Dendritic cell treated with granulocyte-macrophage colony-stimulating factor and Interleukin-4, amounts not matched to agents 40 ng/mL and 50 ng/mL, for 4 days (primary cell): ENCODE measurements at regions of chr7 and their contacts with region 1.

Region 1: DNA sequence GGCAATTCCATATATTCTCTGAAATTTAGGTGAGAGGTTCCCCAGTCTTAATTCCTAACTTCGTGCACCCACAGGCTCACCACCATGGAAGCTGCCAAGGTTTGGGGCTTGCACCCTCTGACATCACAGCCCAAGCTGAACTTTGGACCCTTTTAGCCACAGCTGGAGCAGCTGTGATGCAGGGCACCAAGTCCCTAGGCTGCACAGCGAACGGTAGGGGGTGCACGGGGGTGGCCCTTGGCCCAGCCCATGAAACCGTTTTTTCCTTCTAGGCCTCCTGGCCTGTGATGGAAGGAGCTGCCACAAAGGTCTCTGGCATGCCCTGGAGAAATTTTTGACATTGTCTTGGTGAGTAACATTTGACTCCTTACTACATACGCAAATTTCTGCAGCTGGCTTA is 251.9 kb upstream of the GRM3 start:
- H3K4me3 Mint-ChIP-seq: no peak overlapping the region
- H3K27ac Mint-ChIP-seq: no peak overlapping the region
- H3K4me1 Mint-ChIP-seq: no peaks in the 10 kb centered on the region
- H3K27me3 Mint-ChIP-seq: no peaks in the 10 kb centered on the region

Region 2: DNA sequence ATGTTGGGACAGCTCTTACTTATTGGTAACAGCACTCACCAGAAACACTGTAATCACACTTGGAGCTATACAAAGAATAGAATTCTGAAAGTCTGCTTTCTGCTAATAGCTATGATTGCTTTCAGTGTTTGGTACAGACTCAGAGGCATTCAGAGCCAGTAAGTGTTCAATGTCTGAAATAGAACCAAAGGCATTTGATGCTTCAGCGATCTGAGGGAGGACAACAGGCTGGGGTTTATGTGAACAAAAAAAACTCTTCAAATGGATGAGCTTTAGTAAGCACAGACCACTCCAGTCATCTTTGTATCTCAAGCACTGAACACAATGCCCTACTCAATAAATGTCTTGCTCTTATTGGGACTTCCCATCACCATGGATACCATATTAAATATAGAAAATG is 70.9 kb before region 1 on chr7:
- intact Hi-C with region 1: loop called (anchors 10 kb)
- H3K4me3 Mint-ChIP-seq: no peak overlapping the region
- H3K27ac Mint-ChIP-seq: no peak overlapping the region
- H3K4me1 Mint-ChIP-seq: no peaks in the 10 kb centered on the region
- H3K27me3 Mint-ChIP-seq: no peaks in the 10 kb centered on the region